PC-3 (cell line): ENCODE measurements at regions of chr12 and their contacts with region 1.

Region 1: GRCh38 chr12:84842406-84843013 is 70.1 kb downstream of the SLC6A15 start:
- DNase-seq: peak; percentile 79
- ATAC-seq: 0 out of 2 replicates have a peak, but pooled peaks have one; percentile 35
- H3K4me3 ChIP-seq: no peak overlapping the region
- H3K27ac ChIP-seq: no peak overlapping the region
- H3K4me1 ChIP-seq: no peaks in the 10 kb centered on the region
- H3K27me3 ChIP-seq: no peaks in the 10 kb centered on the region
- CTCF ChIP-seq: peak; percentile 82

Region 2: GRCh38 chr12:83005534-83006197 is 1836.8 kb before region 1 on chr12:
- CTCF ChIA-PET with region 1: no interaction called
- POLR2A ChIA-PET with region 1: no interaction called
- intact Hi-C with region 1: loop called (anchors 1 kb)
- DNase-seq: no peak
- ATAC-seq: no peak
- H3K4me3 ChIP-seq: no peak overlapping the region
- H3K27ac ChIP-seq: no peak overlapping the region
- H3K4me1 ChIP-seq: peaks cover 8% of the 10 kb centered on the region; the same call in 1 of the 2 replicates
- H3K27me3 ChIP-seq: no peaks in the 10 kb centered on the region
- CTCF ChIP-seq: no peak

Region 3: DNA sequence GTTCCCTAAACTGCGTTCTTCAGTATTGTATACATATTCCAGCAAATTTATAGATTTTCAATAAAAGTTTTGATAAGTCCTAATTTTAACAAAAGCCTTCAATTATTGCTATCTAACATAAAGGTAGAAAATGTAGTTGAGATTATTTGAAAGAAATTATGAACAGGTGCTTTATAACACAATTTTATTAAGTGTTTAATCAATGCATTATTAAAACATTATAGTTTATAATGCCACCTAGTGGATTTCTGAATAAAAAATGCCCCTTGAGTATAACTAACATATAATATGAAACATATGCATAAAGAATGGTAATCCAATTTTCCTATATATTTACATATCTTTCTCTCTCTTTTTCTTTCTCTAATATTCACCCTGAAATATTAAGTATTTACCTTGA is 445.2 kb before region 1 on chr12:
- CTCF ChIA-PET with region 1: no interaction called
- POLR2A ChIA-PET with region 1: no interaction called
- intact Hi-C with region 1: loop called (anchors 5 kb)
- DNase-seq: peak; percentile 56
- ATAC-seq: no peak
- H3K4me3 ChIP-seq: no peak overlapping the region
- H3K27ac ChIP-seq: no peak overlapping the region
- H3K4me1 ChIP-seq: no peaks in the 10 kb centered on the region
- H3K27me3 ChIP-seq: no peaks in the 10 kb centered on the region
- CTCF ChIP-seq: peak; percentile 70

Region 4: DNA sequence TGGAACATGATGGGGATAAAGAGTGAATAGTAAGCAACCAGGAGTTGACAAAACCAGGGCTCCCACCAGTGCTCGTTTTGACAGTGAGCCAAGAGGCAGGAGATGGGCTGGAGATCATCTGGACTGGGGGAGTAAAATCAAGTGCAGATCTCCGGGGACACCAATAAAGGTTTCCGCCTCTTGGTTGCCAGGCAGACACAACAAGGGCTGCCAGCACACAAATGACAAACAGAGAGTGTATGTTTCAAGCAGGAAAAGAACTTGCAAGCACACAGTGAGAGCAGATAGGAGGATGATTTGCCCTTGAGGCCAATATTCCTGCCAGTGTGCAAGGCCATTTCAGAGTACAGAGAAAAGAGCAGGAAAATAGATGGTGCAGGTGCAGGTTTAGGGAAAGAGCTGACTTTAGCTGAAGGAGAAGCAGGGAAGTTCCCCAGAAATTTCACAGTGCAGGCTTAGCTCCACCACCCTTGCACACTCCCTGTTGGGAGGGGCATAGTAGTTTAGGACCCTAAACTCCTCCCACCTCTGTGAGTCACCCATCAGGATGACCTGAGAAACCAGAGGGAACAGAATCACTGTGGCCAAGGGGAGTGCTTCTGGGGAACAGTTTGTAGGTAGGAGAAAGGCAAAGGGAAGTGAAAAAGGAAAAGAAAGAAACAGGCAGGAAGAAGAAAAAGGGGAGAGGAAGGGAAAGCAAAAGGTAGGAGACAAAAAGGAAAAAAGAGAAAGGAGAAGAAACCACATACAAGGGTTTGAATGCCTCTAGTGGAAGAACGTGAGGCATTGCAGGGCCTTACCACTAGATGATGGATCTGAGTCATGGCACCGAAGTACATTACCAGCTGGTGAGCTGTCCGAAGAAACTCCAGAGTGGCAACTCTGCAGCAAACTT is 334.3 kb before region 1 on chr12:
- CTCF ChIA-PET with region 1: no interaction called
- POLR2A ChIA-PET with region 1: no interaction called
- intact Hi-C with region 1: loop called (anchors 5 kb)
- DNase-seq: peak; percentile 86
- ATAC-seq: peak; percentile 89
- H3K4me3 ChIP-seq: no peak overlapping the region
- H3K27ac ChIP-seq: peak overlapping the region; percentile 23
- H3K4me1 ChIP-seq: peaks cover 25% of the 10 kb centered on the region
- H3K27me3 ChIP-seq: no peaks in the 10 kb centered on the region
- CTCF ChIP-seq: peak; percentile 68

Region 5: GRCh38 chr12:84619113-84619512 is 223.4 kb before region 1 on chr12:
- CTCF ChIA-PET with region 1: no interaction called
- POLR2A ChIA-PET with region 1: no interaction called
- intact Hi-C with region 1: loop called (anchors 2 kb)
- DNase-seq: peak; percentile 37
- ATAC-seq: 0 out of 2 replicates have a peak, but pooled peaks have one; percentile 27
- H3K4me3 ChIP-seq: no peak overlapping the region
- H3K27ac ChIP-seq: no peak overlapping the region
- H3K4me1 ChIP-seq: no peaks in the 10 kb centered on the region
- H3K27me3 ChIP-seq: no peaks in the 10 kb centered on the region
- CTCF ChIP-seq: peak; percentile 77

Region 6: GRCh38 chr12:84637926-84638325 is 204.6 kb before region 1 on chr12:
- CTCF ChIA-PET with region 1: interaction called, 4 read pairs
- POLR2A ChIA-PET with region 1: no interaction called
- intact Hi-C with region 1: loop called (anchors 1 kb)
- DNase-seq: no peak
- ATAC-seq: no peak
- H3K4me3 ChIP-seq: no peak overlapping the region
- H3K27ac ChIP-seq: no peak overlapping the region
- H3K4me1 ChIP-seq: no peaks in the 10 kb centered on the region
- H3K27me3 ChIP-seq: no peaks in the 10 kb centered on the region
- CTCF ChIP-seq: no peak; the same call in 1 of the 2 replicates

Region 7: GRCh38 chr12:84745127-84745526 is 97.4 kb before region 1 on chr12:
- CTCF ChIA-PET with region 1: no interaction called
- POLR2A ChIA-PET with region 1: no interaction called
- intact Hi-C with region 1: loop called (anchors 1 kb)
- DNase-seq: no peak
- ATAC-seq: no peak; the same call in 1 of the 2 replicates
- H3K4me3 ChIP-seq: no peak overlapping the region
- H3K27ac ChIP-seq: no peak overlapping the region
- H3K4me1 ChIP-seq: no peaks in the 10 kb centered on the region
- H3K27me3 ChIP-seq: no peaks in the 10 kb centered on the region
- CTCF ChIP-seq: no peak

Region 8: GRCh38 chr12:84814664-84815245 is 27.8 kb before region 1 on chr12:
- CTCF ChIA-PET with region 1: no interaction called
- POLR2A ChIA-PET with region 1: no interaction called
- intact Hi-C with region 1: no loop called
- DNase-seq: peak; percentile 28
- ATAC-seq: no peak
- H3K4me3 ChIP-seq: no peak overlapping the region
- H3K27ac ChIP-seq: no peak overlapping the region
- H3K4me1 ChIP-seq: peaks cover 18% of the 10 kb centered on the region
- H3K27me3 ChIP-seq: no peaks in the 10 kb centered on the region
- CTCF ChIP-seq: no peak